Calu3 (cell line): ENCODE measurements at regions of chr4 and their contacts with region 1.

Region 1: GRCh38 chr4:13980317-13981310 is 353.1 kb upstream of the BOD1L1 start:
- DNase-seq: no peak
- H3K4me3 Mint-ChIP-seq: no peak overlapping the region
- H3K27ac Mint-ChIP-seq: peak overlapping the region; percentile 41
- H3K4me1 Mint-ChIP-seq: peaks cover 47% of the 10 kb centered on the region
- H3K27me3 Mint-ChIP-seq: no peaks in the 10 kb centered on the region
- CTCF ChIP-seq: no peak

Region 2: DNA sequence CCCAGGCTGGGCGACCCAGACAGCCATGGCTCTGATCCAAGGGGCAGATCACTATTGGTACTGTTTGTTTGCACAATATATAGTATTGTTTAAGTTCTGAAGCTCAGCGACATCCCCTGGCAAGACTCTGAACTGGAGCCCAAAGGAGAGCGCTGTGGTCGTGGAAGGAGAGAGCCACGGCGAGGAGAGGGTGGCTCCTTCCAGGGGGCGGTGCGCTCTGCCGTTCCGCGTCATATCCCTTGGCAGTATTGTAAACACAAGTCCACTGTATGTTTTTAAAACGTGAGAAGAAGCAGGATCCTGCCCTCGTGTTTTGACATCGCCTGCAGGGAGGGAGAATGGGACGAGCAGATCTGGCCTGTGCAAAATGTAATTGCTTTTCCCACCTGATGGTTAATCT is 682.0 kb before region 1 on chr4:
- CTCF ChIA-PET with region 1: no interaction called
- intact Hi-C with region 1: no loop called
- DNase-seq: no peak
- H3K4me3 Mint-ChIP-seq: no peak overlapping the region
- H3K27ac Mint-ChIP-seq: no peak overlapping the region
- H3K4me1 Mint-ChIP-seq: no peaks in the 10 kb centered on the region
- H3K27me3 Mint-ChIP-seq: no peaks in the 10 kb centered on the region
- CTCF ChIP-seq: no peak

Region 3: DNA sequence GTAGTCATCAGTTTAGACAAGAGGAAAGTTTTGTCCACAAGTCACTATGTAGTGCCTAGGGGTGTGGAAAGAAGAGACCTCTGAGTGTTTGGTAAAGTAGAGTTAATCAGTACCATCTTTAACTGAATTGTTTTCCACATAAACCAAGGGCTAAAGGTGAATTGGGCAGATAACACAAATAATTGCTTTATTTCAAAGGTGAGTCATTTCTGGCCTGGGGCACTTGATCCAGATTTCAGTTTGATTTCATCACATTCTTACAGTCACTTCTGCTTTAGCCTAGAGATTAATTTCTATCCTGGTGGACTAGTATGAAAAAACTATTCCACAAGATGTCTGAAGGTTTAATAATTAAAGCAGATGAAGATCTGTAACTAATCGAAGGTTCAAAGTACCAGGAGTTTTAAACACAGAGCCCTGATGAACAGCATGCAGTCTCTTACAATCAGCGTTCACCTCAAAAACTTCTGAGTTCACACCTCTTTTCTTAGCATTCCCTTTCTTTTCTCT is 278.6 kb before region 1 on chr4:
- CTCF ChIA-PET with region 1: no interaction called
- intact Hi-C with region 1: loop called (anchors 2 kb)
- DNase-seq: peak; percentile 47
- H3K4me3 Mint-ChIP-seq: peak overlapping the region; percentile 30
- H3K27ac Mint-ChIP-seq: peak overlapping the region; percentile 85
- H3K4me1 Mint-ChIP-seq: peaks cover 32% of the 10 kb centered on the region
- H3K27me3 Mint-ChIP-seq: no peaks in the 10 kb centered on the region
- CTCF ChIP-seq: no peak

Region 4: DNA sequence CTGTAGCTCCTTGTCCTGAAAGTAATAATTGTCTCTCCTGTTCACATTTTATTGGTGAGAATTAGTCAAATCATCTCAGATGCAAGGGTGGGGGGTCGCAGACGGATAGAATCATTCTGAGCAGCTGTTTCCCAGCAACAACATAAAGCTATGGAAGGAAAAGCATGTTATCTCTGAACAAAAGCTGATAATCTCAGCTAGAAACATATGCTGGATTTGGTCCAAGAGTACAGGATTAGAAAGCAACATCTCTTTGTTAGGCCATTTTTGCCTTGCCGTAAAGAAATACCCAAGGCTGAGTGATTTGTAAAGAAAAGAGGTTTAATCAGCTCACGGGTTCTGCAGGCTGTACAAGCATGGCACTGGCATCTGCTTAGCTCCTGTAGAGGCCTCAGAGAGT is 119.7 kb after region 1 on chr4:
- CTCF ChIA-PET with region 1: no interaction called
- intact Hi-C with region 1: no loop called
- DNase-seq: no peak
- H3K4me3 Mint-ChIP-seq: no peak overlapping the region
- H3K27ac Mint-ChIP-seq: no peak overlapping the region
- H3K4me1 Mint-ChIP-seq: no peaks in the 10 kb centered on the region
- H3K27me3 Mint-ChIP-seq: no peaks in the 10 kb centered on the region
- CTCF ChIP-seq: no peak

Region 5: DNA sequence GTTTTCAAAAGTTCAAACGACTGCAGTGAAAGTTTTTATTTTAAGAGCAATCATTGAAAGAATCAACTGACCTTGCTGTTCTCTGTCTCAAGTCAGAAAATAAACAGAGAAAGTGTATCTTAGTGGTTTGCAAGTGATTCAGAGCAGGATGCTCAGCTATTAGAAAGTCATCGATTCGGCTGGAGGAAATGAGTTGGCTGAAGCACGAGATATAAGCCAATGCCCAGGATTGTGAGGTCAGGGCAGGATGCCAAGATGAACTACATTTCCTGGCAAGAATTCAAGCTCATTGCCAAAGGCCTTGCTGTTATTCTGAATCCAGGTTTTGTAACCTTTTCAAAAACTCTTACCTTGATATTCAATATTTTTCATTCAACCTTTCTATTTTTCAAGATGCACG is 188.3 kb after region 1 on chr4:
- CTCF ChIA-PET with region 1: no interaction called
- intact Hi-C with region 1: loop called (anchors 10 kb)
- DNase-seq: peak; percentile 79
- H3K4me3 Mint-ChIP-seq: no peak overlapping the region
- H3K27ac Mint-ChIP-seq: no peak overlapping the region
- H3K4me1 Mint-ChIP-seq: peaks cover 16% of the 10 kb centered on the region
- H3K27me3 Mint-ChIP-seq: no peaks in the 10 kb centered on the region
- CTCF ChIP-seq: no peak